A673 (cell line): ENCODE measurements at regions of chr7 and their contacts with region 1.

Region 1: GRCh38 chr7:108146070-108146837 is 16.1 kb upstream of the LAMB4 start:
- DNase-seq: peak; percentile 85
- H3K4me3 ChIP-seq: no peak overlapping the region
- H3K27ac ChIP-seq: no peak overlapping the region
- H3K4me1 ChIP-seq: no peaks in the 10 kb centered on the region
- H3K27me3 ChIP-seq: no peaks in the 10 kb centered on the region
- CTCF ChIP-seq: peak; percentile 86

Region 2: DNA sequence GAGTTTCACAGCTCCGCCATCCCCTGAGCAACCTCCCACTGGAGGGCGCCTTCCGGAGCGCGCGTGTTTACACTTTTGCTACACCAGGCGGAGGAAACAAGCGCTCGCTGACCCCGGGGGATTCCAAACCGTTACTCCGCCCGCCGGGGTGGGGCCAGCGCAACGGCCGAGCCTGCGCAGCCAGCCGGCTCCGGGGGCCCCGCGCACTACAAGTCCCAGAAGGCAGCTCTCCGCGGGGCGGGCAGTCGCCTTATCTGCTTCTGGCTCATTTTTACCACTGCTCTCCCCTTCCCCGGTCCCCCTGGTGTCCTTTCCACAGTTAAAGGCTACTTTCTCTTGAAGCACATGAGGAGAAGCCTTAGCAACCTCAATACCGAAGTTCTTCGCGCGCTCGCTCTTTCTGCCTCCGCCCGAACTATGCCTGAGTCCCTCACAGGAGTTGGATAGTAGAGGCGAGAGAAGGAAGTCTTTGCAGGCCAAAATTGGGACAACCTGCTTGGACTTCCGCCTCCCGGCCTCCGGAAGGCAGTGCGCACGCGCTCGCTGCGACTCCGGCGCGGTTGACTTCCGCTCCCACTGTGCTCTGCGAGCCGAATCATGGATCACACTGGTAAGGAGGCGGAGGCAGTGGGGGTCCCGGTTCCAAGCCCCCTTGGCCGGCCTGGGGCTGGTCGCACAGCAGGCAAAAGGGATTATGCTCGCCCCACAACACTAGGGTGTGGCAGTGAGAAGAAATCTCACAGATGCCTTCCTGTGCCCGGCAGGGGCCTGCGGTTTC is 402.5 kb before region 1 on chr7 and contains the start of gene CBLL1:
- CTCF ChIA-PET with region 1: no interaction called
- POLR2A ChIA-PET with region 1: no interaction called
- intact Hi-C with region 1: loop called (anchors 10 kb)
- DNase-seq: peak; percentile 98
- H3K4me3 ChIP-seq: peak within 1 kb of the TSS; percentile 80
- H3K27ac ChIP-seq: peak within 1 kb of the TSS; percentile 97
- H3K4me1 ChIP-seq: peaks cover 23% of the 10 kb centered on the region
- H3K27me3 ChIP-seq: no peaks in the 10 kb centered on the region
- CTCF ChIP-seq: peak; percentile 86
- total RNA-seq, gene CBLL1: 30.8 and 37.9 TPM in 2 replicates

Region 3: DNA sequence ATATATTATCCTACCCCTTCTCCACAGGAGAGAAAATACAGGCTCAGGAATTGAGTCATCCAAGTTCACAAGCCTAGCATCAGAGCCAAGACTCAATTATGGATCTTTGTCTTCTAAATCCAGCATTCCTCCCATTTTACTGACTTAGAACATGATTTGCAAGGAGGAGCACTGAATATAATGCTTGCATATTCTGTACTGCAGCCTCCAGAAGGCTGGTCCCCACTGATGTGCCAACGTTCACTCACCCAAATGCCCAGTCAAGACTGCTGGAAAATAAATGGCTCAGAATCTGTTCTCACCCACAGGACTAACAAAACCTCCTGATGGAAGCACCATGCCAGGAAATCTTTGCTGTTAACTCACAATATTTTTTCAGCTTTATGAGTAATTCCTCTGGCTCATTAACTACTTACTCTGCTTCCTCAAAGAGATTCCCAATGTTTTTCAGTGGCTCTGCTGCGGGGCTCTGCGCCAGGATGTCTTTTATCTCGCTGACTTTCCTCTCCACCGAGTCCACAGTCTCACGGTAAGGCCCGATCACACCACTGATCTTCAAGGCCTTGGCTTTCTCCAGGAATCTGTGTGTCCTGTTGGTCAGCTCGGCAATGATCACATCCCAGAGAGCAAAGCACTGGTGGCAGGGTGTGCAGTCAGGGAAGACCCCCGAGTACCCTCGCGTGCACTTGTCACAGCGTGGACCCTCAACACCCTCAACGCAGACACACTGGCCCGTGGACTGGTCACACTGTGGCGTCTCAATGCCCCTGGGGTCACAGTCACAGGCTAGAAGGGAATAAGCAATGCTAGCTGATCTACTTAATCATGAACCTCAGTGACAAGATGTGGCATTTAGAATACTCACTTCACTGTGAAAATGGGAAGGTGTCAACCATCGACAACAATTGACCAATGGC is 206.4 kb before region 1 on chr7:
- CTCF ChIA-PET with region 1: no interaction called
- POLR2A ChIA-PET with region 1: no interaction called
- intact Hi-C with region 1: loop called (anchors 10 kb)
- DNase-seq: peak; percentile 49
- H3K4me3 ChIP-seq: no peak overlapping the region
- H3K27ac ChIP-seq: peak overlapping the region; percentile 35
- H3K4me1 ChIP-seq: peaks cover 43% of the 10 kb centered on the region
- H3K27me3 ChIP-seq: no peaks in the 10 kb centered on the region
- CTCF ChIP-seq: no peak

Region 4: DNA sequence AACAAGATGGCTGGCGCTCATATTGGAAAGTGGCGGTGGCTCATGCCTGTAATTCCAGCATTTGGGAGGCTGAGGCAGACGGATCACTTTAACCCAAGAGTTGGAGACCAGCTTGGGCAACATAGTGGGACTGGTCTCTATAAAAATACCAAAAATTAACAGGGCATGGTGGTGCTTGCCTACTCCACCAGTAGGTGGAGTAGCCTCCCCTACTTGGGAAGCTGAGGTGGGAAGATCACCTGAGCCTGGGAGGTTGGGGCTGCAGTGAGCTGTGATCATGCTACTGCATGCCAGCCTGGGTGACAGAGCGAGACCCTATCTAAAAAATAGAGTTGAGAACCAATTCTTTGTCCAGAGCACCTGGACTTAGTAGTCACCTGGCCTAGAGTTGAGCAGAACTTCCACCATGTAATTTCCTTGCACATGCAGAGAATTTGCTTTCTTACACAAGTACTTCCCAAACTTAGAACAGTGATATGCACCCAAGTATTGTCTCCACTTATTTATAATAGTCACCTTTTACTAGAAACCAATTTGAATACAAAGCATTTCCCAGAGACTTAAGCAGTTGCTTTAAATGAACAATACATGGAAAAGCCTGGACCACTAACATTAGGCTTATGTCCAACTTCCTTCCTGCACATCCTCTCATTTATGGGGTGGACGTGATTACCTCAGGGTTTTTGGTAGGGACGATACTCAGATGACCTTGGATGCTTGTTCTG is 32.0 kb before region 1 on chr7:
- CTCF ChIA-PET with region 1: interaction called, 3 read pairs
- POLR2A ChIA-PET with region 1: no interaction called
- intact Hi-C with region 1: loop called (anchors 5 kb)
- DNase-seq: peak; percentile 25
- H3K4me3 ChIP-seq: no peak overlapping the region
- H3K27ac ChIP-seq: no peak overlapping the region
- H3K4me1 ChIP-seq: no peaks in the 10 kb centered on the region
- H3K27me3 ChIP-seq: no peaks in the 10 kb centered on the region
- CTCF ChIP-seq: peak; percentile 75